ENCODE measurements at regions of chr10 and their contacts with region 1.

Region 1: GRCh38 chr10:110059925-110060324 is 52.1 kb downstream of the ADD3 start:
- DNase-seq: no peak
- ATAC-seq: no peak
- H3K4me3 Mint-ChIP-seq: no peak overlapping the region
- H3K27ac Mint-ChIP-seq: peak overlapping the region; percentile 79
- H3K4me1 Mint-ChIP-seq: peaks cover 79% of the 10 kb centered on the region
- H3K27me3 Mint-ChIP-seq: no peaks in the 10 kb centered on the region
- CTCF ChIP-seq: no peak

Region 2: DNA sequence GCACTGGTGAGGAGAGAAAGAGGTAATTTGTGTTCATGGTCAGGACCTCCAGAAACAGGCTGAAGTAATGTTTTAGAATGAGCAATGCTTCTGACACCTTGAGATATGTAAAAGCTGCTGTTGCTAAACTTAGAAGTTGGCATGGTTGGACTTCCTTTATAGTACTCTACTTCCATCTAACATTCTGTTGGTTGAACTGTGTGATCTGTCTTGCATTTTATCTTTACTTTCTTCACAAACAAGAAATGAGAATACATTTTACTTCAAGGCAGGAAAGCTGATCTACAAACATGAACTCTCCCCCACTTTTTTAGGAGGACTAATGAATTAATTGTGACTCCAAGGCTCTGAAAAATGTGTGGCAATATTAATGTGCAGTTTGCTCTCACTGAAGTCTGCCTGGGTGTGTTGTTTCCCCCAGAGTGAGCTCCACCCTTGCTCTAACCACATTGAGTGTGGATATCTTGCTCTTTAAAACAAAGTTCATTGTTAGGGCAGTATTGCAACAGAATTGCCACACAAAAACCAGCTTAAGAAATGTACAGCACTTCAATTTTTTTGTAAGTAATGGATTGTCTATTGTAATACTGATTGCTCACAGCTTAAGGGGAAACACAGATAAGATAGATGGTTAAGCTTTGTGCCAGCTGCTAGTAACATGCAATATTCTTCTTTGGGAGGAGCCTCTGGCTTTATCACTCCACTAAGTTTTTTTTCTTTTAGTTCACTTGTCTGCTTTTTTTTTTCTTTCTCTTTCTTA is 16.8 kb after region 1 on chr10:
- CTCF ChIA-PET with region 1: interaction called, 10 read pairs
- POLR2A ChIA-PET with region 1: interaction called, 3 read pairs
- intact Hi-C with region 1: no loop called
- DNase-seq: peak; percentile 41
- ATAC-seq: peak; percentile 60
- H3K4me3 Mint-ChIP-seq: peak overlapping the region; percentile 73
- H3K27ac Mint-ChIP-seq: peak overlapping the region; percentile 92
- H3K4me1 Mint-ChIP-seq: peaks cover 83% of the 10 kb centered on the region
- H3K27me3 Mint-ChIP-seq: no peaks in the 10 kb centered on the region
- CTCF ChIP-seq: no peak

Region 3: GRCh38 chr10:110101464-110102144 is 41.7 kb after region 1 on chr10:
- CTCF ChIA-PET with region 1: interaction called, 3 read pairs
- POLR2A ChIA-PET with region 1: no interaction called
- intact Hi-C with region 1: loop called (anchors 5 kb)
- DNase-seq: no peak
- ATAC-seq: peak; percentile 70
- H3K4me3 Mint-ChIP-seq: peak overlapping the region; percentile 18
- H3K27ac Mint-ChIP-seq: peak overlapping the region; percentile 91
- H3K4me1 Mint-ChIP-seq: peaks cover 68% of the 10 kb centered on the region
- H3K27me3 Mint-ChIP-seq: no peaks in the 10 kb centered on the region
- CTCF ChIP-seq: no peak

Measured in activated CD8-positive, alpha-beta T cell treated with anti-CD3 and anti-CD28 coated beads for 36 hours (primary cell).